ENCODE measurements at regions of chr22 and their contacts with region 1.

Region 1: GRCh38 chr22:41285820-41286638 is at the start of gene RANGAP1:
- DNase-seq: peak; percentile 99
- H3K4me3 Mint-ChIP-seq: peak within 1 kb of the TSS; percentile 94
- H3K27ac Mint-ChIP-seq: peak within 1 kb of the TSS; percentile 97
- H3K4me1 Mint-ChIP-seq: peaks cover 28% of the 10 kb centered on the region
- H3K27me3 Mint-ChIP-seq: no peaks in the 10 kb centered on the region
- total RNA-seq, gene RANGAP1: 185 and 187 TPM in 2 replicates

Region 2: GRCh38 chr22:39520054-39520891 is 1765.8 kb before region 1 on chr22 and contains the start of gene ATF4:
- intact Hi-C with region 1: loop called (anchors 10 kb)
- DNase-seq: peak; percentile 99
- H3K4me3 Mint-ChIP-seq: peak within 1 kb of the TSS; percentile 93
- H3K27ac Mint-ChIP-seq: peak within 1 kb of the TSS; percentile 98
- H3K4me1 Mint-ChIP-seq: peaks cover 50% of the 10 kb centered on the region
- H3K27me3 Mint-ChIP-seq: peaks cover 2% of the 10 kb centered on the region
- total RNA-seq, gene ATF4: 392 and 393 TPM in 2 replicates

Region 3: DNA sequence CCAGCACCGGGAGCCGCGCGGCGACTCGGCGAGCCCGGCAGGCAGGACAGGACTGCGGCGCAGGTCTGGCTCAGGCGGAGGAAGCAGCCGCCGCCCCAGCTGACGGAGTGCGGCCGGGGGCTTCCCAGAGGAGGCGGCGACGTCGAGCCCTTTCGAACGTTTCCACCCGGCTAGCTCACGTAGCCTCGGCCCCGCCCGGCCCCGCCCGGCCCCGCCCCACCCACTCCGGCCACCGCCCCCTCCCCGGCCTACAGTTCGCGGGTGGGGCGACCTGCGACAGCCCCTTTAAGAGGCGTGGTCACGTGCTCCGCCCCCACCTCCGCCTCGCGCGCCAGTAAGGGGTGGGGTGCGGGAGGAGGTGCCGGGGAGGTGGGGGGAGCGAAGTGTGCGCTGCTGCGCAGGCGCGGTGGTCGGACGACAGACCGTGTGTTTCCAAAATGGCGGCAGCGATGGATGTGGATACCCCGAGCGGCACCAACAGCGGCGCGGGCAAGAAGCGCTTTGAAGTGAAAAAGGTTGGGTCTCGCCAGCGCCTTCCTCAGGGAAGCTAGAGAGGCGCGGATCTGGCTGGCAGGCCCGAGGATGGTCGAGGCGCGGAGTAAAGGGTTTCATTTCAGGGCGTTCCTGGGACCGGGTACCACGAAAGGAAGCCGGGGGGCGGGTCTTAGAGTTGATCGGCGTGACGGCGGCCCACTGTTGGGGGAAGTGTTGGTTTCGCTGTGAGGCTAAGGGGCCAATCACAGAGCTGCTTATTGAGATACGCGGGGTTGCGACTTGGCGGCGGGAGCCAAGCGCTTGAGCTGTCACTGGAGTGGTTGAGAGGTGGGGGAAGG is 334.9 kb before region 1 on chr22 and contains the start of gene RBX1:
- intact Hi-C with region 1: loop called (anchors 1 kb)
- DNase-seq: peak; percentile 100
- H3K4me3 Mint-ChIP-seq: peak within 1 kb of the TSS; percentile 98
- H3K27ac Mint-ChIP-seq: peak within 1 kb of the TSS; percentile 100
- H3K4me1 Mint-ChIP-seq: peaks cover 33% of the 10 kb centered on the region
- H3K27me3 Mint-ChIP-seq: no peaks in the 10 kb centered on the region
- total RNA-seq, gene RBX1: 98.5 and 106 TPM in 2 replicates

Region 4: GRCh38 chr22:41204992-41205900 is 80.8 kb before region 1 on chr22 and contains the start of gene L3MBTL2:
- intact Hi-C with region 1: loop called (anchors 1 kb)
- DNase-seq: peak; percentile 100
- H3K4me3 Mint-ChIP-seq: peak within 1 kb of the TSS; percentile 94
- H3K27ac Mint-ChIP-seq: peak within 1 kb of the TSS; percentile 94
- H3K4me1 Mint-ChIP-seq: peaks cover 20% of the 10 kb centered on the region
- H3K27me3 Mint-ChIP-seq: peaks cover 19% of the 10 kb centered on the region
- total RNA-seq, gene L3MBTL2: 53.3 and 55.0 TPM in 2 replicates

Region 5: GRCh38 chr22:41381329-41382097 is 95.5 kb after region 1 on chr22 and contains the start of gene TEF:
- intact Hi-C with region 1: loop called (anchors 1 kb)
- DNase-seq: peak; percentile 99
- H3K4me3 Mint-ChIP-seq: peak within 1 kb of the TSS; percentile 95
- H3K27ac Mint-ChIP-seq: peak within 1 kb of the TSS; percentile 95
- H3K4me1 Mint-ChIP-seq: peaks cover 12% of the 10 kb centered on the region
- H3K27me3 Mint-ChIP-seq: peaks cover 3% of the 10 kb centered on the region
- total RNA-seq, gene TEF: 2.0 and 2.1 TPM in 2 replicates

Region 6: GRCh38 chr22:41468381-41469217 is 182.6 kb after region 1 on chr22 and contains the starts of genes ACO2 and PHF5A:
- intact Hi-C with region 1: loop called (anchors 1 kb)
- DNase-seq: peak; percentile 100
- H3K4me3 Mint-ChIP-seq: peak within 1 kb of the TSS; percentile 86
- H3K27ac Mint-ChIP-seq: peak within 1 kb of the TSS; percentile 97
- H3K4me1 Mint-ChIP-seq: peaks cover 35% of the 10 kb centered on the region
- H3K27me3 Mint-ChIP-seq: no peaks in the 10 kb centered on the region
- total RNA-seq, gene ACO2: 103 and 104 TPM in 2 replicates
- total RNA-seq, gene PHF5A: 90.3 and 98.3 TPM in 2 replicates

Region 7: DNA sequence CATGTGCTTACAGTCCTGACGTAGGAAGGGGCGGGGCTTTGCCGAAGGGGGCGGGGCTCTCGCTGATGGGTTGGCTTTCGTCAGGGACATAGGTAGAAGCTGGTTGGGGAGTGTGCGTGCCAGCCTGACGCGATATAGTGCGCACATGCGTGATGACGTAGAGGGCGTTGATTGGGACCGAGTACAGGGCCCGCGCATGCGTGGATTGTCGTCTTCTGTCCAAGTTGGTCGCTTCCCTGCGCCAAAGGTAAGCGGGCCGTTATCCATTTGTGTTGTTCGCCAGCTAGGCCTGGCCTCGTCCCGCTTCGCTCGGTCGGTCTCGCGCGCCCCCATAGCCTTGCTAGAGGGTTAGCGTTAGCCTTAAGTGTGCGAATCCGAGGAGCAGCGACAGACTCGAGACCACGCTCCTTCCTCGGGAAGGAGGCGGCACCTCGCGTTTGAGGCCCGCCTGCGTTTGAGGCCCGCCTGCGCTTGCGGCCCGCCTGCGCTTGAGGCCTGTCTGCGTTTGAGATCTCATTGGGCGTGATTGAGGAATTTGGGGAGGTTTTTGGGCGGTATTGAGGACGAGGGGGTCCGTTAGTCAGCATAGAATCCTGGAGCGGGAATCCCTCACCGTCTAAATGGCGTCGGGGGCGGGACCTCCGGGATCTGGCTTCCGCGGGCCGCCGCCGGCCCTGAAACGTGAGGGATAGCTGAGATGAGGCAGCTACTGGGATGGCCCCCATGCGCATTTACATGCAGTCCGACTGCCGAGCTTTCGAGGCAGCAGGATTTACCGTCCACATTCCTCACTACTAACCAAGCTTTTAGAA is 335.3 kb after region 1 on chr22 and contains the start of gene XRCC6:
- intact Hi-C with region 1: loop called (anchors 2 kb)
- DNase-seq: peak; percentile 99
- H3K4me3 Mint-ChIP-seq: peak within 1 kb of the TSS; percentile 99
- H3K27ac Mint-ChIP-seq: peak within 1 kb of the TSS; percentile 99
- H3K4me1 Mint-ChIP-seq: peaks cover 34% of the 10 kb centered on the region
- H3K27me3 Mint-ChIP-seq: no peaks in the 10 kb centered on the region
- total RNA-seq, gene XRCC6: 400 and 414 TPM in 2 replicates

Measured in activated CD4-positive, alpha-beta T cell treated with anti-CD3 and anti-CD28 coated beads, Interleukin-2, amount 10 ng/mL, durations not matched to agents 24 days and 14 days (primary cell).